ENCODE measurements at regions of chr16 and their contacts with region 1.

Region 1: GRCh38 chr16:3074860-3075522 is 9.6 kb downstream of the IL32 start:
- DNase-seq: peak; percentile 90 to 96 (median 91)
- H3K4me3 ChIP-seq: peak overlapping the region; percentile 4 to 29
- H3K4me3 Mint-ChIP-seq: peak overlapping the region; percentile 74 to 87 (median 83)
- H3K27ac ChIP-seq: peak overlapping the region; percentile 77
- H3K27ac Mint-ChIP-seq: peak overlapping the region; percentile 91 to 99 (median 97)
- H3K4me1 ChIP-seq: peaks cover 98% of the 10 kb centered on the region
- H3K4me1 Mint-ChIP-seq: peaks cover 69 to 98% (median 85%) of the 10 kb centered on the region in 4 donors
- H3K27me3 ChIP-seq: no peaks in the 10 kb centered on the region
- H3K27me3 Mint-ChIP-seq: no peaks in the 10 kb centered on the region

Region 2: GRCh38 chr16:3023669-3024478 is 51.1 kb before region 1 on chr16 and contains the starts of genes HCFC1R1 and THOC6:
- CTCF ChIA-PET with region 1: interaction called, 14 read pairs
- POLR2A ChIA-PET with region 1: interaction called, 15 read pairs
- intact Hi-C with region 1: no loop called
- DNase-seq: peak; percentile 95 to 97 (median 95)
- H3K4me3 ChIP-seq: peak within 1 kb of the TSS; percentile 38 to 85
- H3K4me3 Mint-ChIP-seq: peak within 1 kb of the TSS; percentile 87 to 97 (median 93)
- H3K27ac ChIP-seq: peak within 1 kb of the TSS; percentile 90
- H3K27ac Mint-ChIP-seq: peak within 1 kb of the TSS; percentile 97 to 99 (median 99)
- H3K4me1 ChIP-seq: peaks cover 56% of the 10 kb centered on the region
- H3K4me1 Mint-ChIP-seq: peaks cover 22 to 67% (median 45%) of the 10 kb centered on the region in 4 donors
- H3K27me3 ChIP-seq: peaks cover 2% of the 10 kb centered on the region
- H3K27me3 Mint-ChIP-seq: no peaks in the 10 kb centered on the region
- total RNA-seq, gene HCFC1R1: 16.0 to 18.0 TPM
- total RNA-seq, gene THOC6: 18.4 to 22.5 TPM

Region 3: GRCh38 chr16:3045357-3045728 is 29.6 kb before region 1 on chr16:
- CTCF ChIA-PET with region 1: no interaction called
- POLR2A ChIA-PET with region 1: interaction called, 19 read pairs
- intact Hi-C with region 1: no loop called
- DNase-seq: peak in 2 of 5 donors; percentile 48 to 49
- H3K4me3 ChIP-seq: peak overlapping the region in 1 of 2 donors; percentile 18
- H3K4me3 Mint-ChIP-seq: peak overlapping the region; percentile 72 to 90 (median 83)
- H3K27ac ChIP-seq: no peak overlapping the region
- H3K27ac Mint-ChIP-seq: peak overlapping the region in 2 of 7 donors; percentile 12 to 55
- H3K4me1 ChIP-seq: peaks cover 22% of the 10 kb centered on the region
- H3K4me1 Mint-ChIP-seq: peaks cover 10 to 27% (median 12%) of the 10 kb centered on the region in 4 donors
- H3K27me3 ChIP-seq: peaks cover 33% of the 10 kb centered on the region
- H3K27me3 Mint-ChIP-seq: peaks cover 14 to 18% of the 10 kb centered on the region in 2 donors

Region 4: DNA sequence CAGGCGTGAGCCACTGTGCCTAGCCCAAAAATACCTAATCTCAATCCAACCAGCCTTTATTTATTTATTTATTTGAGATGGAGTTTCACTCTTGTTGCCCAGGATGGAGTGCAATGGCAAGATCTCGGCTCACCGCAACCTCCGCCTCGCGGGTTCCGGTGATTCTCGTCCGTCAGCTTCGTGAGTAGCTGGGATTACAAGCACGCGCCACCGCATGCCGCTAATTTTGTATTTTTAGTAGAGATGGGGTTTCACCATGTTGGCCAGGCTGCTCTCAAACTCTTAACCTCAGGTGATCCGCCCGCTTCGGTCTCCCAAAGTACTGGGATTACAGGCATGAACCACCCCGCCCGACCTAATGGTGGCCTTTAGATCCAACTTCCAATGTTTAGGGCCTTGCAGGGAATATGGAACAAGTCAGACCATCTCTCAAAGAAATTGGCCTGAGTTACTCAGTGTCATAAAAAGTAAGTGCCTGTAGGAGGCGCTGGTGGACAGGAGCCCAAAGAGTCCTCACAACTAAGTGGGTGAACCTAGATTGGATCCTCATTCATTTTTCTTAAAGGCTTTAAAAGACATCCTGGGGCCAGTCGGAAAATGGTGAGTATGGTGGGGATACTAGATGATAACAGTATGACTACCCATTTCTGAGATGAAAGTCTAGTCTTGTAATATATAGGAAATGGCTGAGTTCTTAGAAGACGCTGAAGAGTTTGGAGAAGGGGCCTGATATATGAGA is 19.5 kb after region 1 on chr16:
- CTCF ChIA-PET with region 1: interaction called, 78 read pairs
- POLR2A ChIA-PET with region 1: interaction called, 116 read pairs
- intact Hi-C with region 1: no loop called
- DNase-seq: peak; percentile 58 to 76 (median 66)
- H3K4me3 ChIP-seq: no peak overlapping the region
- H3K4me3 Mint-ChIP-seq: peak overlapping the region in 5 of 8 donors; percentile 3 to 77 (median 22)
- H3K27ac ChIP-seq: no peak overlapping the region
- H3K27ac Mint-ChIP-seq: peak overlapping the region; percentile 17 to 95 (median 78)
- H3K4me1 ChIP-seq: peaks cover 45% of the 10 kb centered on the region
- H3K4me1 Mint-ChIP-seq: peaks cover 9 to 56% (median 32%) of the 10 kb centered on the region in 4 donors
- H3K27me3 ChIP-seq: no peaks in the 10 kb centered on the region
- H3K27me3 Mint-ChIP-seq: no peaks in the 10 kb centered on the region

Region 5: DNA sequence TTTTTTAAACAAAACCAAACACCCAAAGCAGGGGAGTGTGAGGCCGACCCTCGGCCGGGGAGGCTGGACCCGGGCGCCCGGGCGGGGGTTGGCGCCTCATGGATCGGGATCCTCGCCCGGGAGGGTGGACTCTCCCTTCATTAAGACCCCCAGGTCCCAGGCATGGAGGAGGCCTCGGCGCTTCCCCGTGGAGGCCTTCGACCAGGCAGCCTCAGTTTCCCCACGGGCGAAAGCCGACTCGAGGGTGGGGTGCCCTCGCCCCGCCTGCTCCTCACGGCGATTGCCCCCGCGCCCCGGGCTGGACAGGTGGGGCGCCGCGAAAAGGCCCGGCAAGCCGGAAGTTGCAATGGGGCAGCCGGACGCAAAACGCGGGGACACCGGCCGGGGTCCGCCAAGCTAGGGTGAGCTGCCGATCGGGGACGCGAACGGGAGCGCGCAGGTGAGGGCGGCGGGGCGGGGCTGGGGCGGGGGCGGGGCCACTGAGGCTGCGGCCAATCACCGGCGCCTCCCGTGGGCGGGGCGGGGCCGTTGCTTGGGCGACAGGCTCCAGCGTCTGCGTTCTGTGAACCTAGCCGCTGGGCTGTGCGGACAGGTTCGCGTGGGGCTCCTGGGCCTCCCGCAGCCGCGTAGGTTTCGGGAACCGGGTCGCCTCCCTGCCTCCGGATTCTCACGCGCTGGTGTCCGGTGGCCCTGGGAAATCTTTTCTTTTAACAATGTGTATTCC is 31.4 kb after region 1 on chr16:
- CTCF ChIA-PET with region 1: interaction called, 14 read pairs
- POLR2A ChIA-PET with region 1: interaction called, 116 read pairs
- intact Hi-C with region 1: loop called (anchors 1 kb)
- DNase-seq: peak; percentile 87 to 90 (median 88)
- H3K4me3 ChIP-seq: peak overlapping the region; percentile 38 to 58
- H3K4me3 Mint-ChIP-seq: peak overlapping the region; percentile 78 to 92 (median 88)
- H3K27ac ChIP-seq: peak overlapping the region; percentile 82
- H3K27ac Mint-ChIP-seq: peak overlapping the region; percentile 86 to 95 (median 92)
- H3K4me1 ChIP-seq: peaks cover 37% of the 10 kb centered on the region
- H3K4me1 Mint-ChIP-seq: peaks cover 12 to 41% (median 27%) of the 10 kb centered on the region in 4 donors
- H3K27me3 ChIP-seq: no peaks in the 10 kb centered on the region
- H3K27me3 Mint-ChIP-seq: no peaks in the 10 kb centered on the region

Region 6: GRCh38 chr16:3143612-3144320 is 68.8 kb after region 1 on chr16:
- CTCF ChIA-PET with region 1: no interaction called
- POLR2A ChIA-PET with region 1: no interaction called
- intact Hi-C with region 1: no loop called
- DNase-seq: no peak
- H3K4me3 ChIP-seq: no peak overlapping the region
- H3K4me3 Mint-ChIP-seq: no peak overlapping the region
- H3K27ac ChIP-seq: no peak overlapping the region
- H3K27ac Mint-ChIP-seq: no peak overlapping the region
- H3K4me1 ChIP-seq: no peaks in the 10 kb centered on the region
- H3K4me1 Mint-ChIP-seq: peaks cover under 1 to 7% (median 4%) of the 10 kb centered on the region in 4 donors
- H3K27me3 ChIP-seq: no peaks in the 10 kb centered on the region
- H3K27me3 Mint-ChIP-seq: no peaks in the 10 kb centered on the region

Region 7: GRCh38 chr16:3729161-3730112 is 654.4 kb after region 1 on chr16:
- CTCF ChIA-PET with region 1: no interaction called
- POLR2A ChIA-PET with region 1: no interaction called
- intact Hi-C with region 1: no loop called
- DNase-seq: no peak
- H3K4me3 ChIP-seq: no peak overlapping the region
- H3K4me3 Mint-ChIP-seq: peak overlapping the region in 1 of 8 donors; percentile 12
- H3K27ac ChIP-seq: no peak overlapping the region
- H3K27ac Mint-ChIP-seq: peak overlapping the region in 3 of 7 donors; percentile 2 to 64 (median 36)
- H3K4me1 ChIP-seq: no peaks in the 10 kb centered on the region
- H3K4me1 Mint-ChIP-seq: peaks cover 0 to 4% (median 0%) of the 10 kb centered on the region in 4 donors
- H3K27me3 ChIP-seq: no peaks in the 10 kb centered on the region
- H3K27me3 Mint-ChIP-seq: no peaks in the 10 kb centered on the region

Region 8: GRCh38 chr16:3880623-3881498 is 805.9 kb after region 1 on chr16 and contains the start of gene CREBBP:
- CTCF ChIA-PET with region 1: no interaction called
- POLR2A ChIA-PET with region 1: no interaction called
- intact Hi-C with region 1: no loop called
- DNase-seq: peak; percentile 81 to 91 (median 87)
- H3K4me3 ChIP-seq: peak within 1 kb of the TSS; percentile 58 to 74
- H3K4me3 Mint-ChIP-seq: peak within 1 kb of the TSS; percentile 85 to 98 (median 92)
- H3K27ac ChIP-seq: peak within 1 kb of the TSS; percentile 71
- H3K27ac Mint-ChIP-seq: peak within 1 kb of the TSS; percentile 87 to 95 (median 93)
- H3K4me1 ChIP-seq: peaks cover 43% of the 10 kb centered on the region
- H3K4me1 Mint-ChIP-seq: peaks cover 31 to 46% (median 37%) of the 10 kb centered on the region in 4 donors
- H3K27me3 ChIP-seq: no peaks in the 10 kb centered on the region
- H3K27me3 Mint-ChIP-seq: peaks cover 3 to 5% of the 10 kb centered on the region in 2 donors
- total RNA-seq, gene CREBBP: 119 to 133 TPM